WTC11 (cell line): ENCODE measurements at regions of chr5 and their contacts with region 1.

Region 1: GRCh38 chr5:60699530-60700382 is at the start of gene DEPDC1B:
- DNase-seq: peak; percentile 91
- ATAC-seq: peak; percentile 86
- H3K4me3 Mint-ChIP-seq: peak within 1 kb of the TSS; percentile 75
- H3K27ac Mint-ChIP-seq: peak within 1 kb of the TSS; percentile 98
- H3K4me1 Mint-ChIP-seq: peaks cover 28% of the 10 kb centered on the region
- H3K27me3 Mint-ChIP-seq: no peaks in the 10 kb centered on the region
- CTCF ChIP-seq: no peak
- total RNA-seq, gene DEPDC1B: 47.2 to 55.1 TPM (median 50.5 TPM) in 3 replicates

Region 2: DNA sequence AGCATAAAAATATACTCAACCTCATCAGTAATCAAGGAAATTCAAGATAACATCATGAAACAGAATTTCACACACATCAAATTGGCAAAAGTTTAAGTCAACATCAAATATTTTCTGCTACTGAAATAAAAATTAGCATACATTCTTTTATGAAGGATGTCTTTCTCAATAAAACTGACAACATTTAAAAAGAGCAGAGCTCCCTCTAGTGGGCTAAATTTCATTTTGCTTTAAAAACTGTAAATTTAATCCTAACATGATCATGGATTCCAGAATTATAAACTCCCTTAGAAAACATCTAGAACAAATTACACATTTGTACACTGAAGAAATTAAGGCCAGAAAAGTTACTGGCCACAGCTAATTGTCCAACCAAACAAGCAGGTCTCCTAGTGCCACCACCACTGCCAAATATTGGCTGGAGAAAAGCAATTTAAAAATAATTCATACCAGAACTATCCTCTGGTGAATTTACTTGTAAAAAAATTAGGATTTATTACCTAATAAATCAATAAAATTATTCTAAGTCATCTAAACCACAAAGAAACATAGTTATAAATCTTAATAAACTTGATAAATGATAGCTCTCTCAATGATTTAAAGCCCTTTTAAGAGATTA is 31.0 kb before region 1 on chr5:
- CTCF ChIA-PET with region 1: interaction called, 12 read pairs
- POLR2A ChIA-PET with region 1: no interaction called
- DNase-seq: no peak
- ATAC-seq: no peak
- H3K4me3 Mint-ChIP-seq: no peak overlapping the region
- H3K27ac Mint-ChIP-seq: no peak overlapping the region
- H3K4me1 Mint-ChIP-seq: peaks cover 13% of the 10 kb centered on the region
- H3K27me3 Mint-ChIP-seq: no peaks in the 10 kb centered on the region
- CTCF ChIP-seq: peak; percentile 63

Region 3: GRCh38 chr5:60687927-60688720 is 11.6 kb before region 1 on chr5:
- CTCF ChIA-PET with region 1: interaction called, 18 read pairs
- POLR2A ChIA-PET with region 1: interaction called, 6 read pairs
- DNase-seq: no peak
- ATAC-seq: peak; percentile 99
- H3K4me3 Mint-ChIP-seq: no peak overlapping the region
- H3K27ac Mint-ChIP-seq: no peak overlapping the region
- H3K4me1 Mint-ChIP-seq: peaks cover 19% of the 10 kb centered on the region
- H3K27me3 Mint-ChIP-seq: no peaks in the 10 kb centered on the region
- CTCF ChIP-seq: no peak

Region 4: GRCh38 chr5:60710373-60710772 is 10.6 kb after region 1 on chr5:
- CTCF ChIA-PET with region 1: interaction called, 11 read pairs
- POLR2A ChIA-PET with region 1: interaction called, 8 read pairs
- DNase-seq: no peak
- ATAC-seq: peak; percentile 51
- H3K4me3 Mint-ChIP-seq: no peak overlapping the region
- H3K27ac Mint-ChIP-seq: no peak overlapping the region
- H3K4me1 Mint-ChIP-seq: no peaks in the 10 kb centered on the region
- H3K27me3 Mint-ChIP-seq: peaks cover 4% of the 10 kb centered on the region; the same call in 1 of the 2 replicates
- CTCF ChIP-seq: no peak

Region 5: GRCh38 chr5:60843936-60844905 is 144.5 kb after region 1 on chr5 and contains the start of gene ELOVL7:
- CTCF ChIA-PET with region 1: interaction called, 10 read pairs
- POLR2A ChIA-PET with region 1: interaction called, 22 read pairs
- DNase-seq: peak; percentile 93
- ATAC-seq: peak; percentile 90
- H3K4me3 Mint-ChIP-seq: peak within 1 kb of the TSS; percentile 93
- H3K27ac Mint-ChIP-seq: peak within 1 kb of the TSS; percentile 94
- H3K4me1 Mint-ChIP-seq: peaks cover 28% of the 10 kb centered on the region
- H3K27me3 Mint-ChIP-seq: peaks cover 23% of the 10 kb centered on the region
- CTCF ChIP-seq: no peak
- total RNA-seq, gene ELOVL7: 7.1 to 8.5 TPM (median 7.8 TPM) in 3 replicates